ENCODE measurements at regions of chr7 and their contacts with region 1.

Region 1: GRCh38 chr7:69932034-69932628 is 333.9 kb downstream of the AUTS2 start:
- DNase-seq: no peak
- ATAC-seq: peak in 3 of 4 donors; percentile 48 to 62 (median 53)
- H3K4me3 ChIP-seq: no peak overlapping the region
- H3K27ac ChIP-seq: no peak overlapping the region
- H3K4me1 ChIP-seq: peaks cover 0 to 16% (median 0%) of the 10 kb centered on the region in 12 donors
- H3K27me3 ChIP-seq: no peaks in the 10 kb centered on the region
- CTCF ChIP-seq: peak; percentile 48 to 76 (median 69)
- POLR2A ChIP-seq: no peak

Region 2: GRCh38 chr7:68063166-68063565 is 1869.0 kb before region 1 on chr7:
- intact Hi-C with region 1: loop called in 1 of 10 experiments (anchors 10 kb)
- DNase-seq: peak in 1 of 5 donors; percentile 6
- ATAC-seq: no peak
- H3K4me3 ChIP-seq: no peak overlapping the region
- H3K27ac ChIP-seq: no peak overlapping the region
- H3K4me1 ChIP-seq: no peaks in the 10 kb centered on the region
- H3K27me3 ChIP-seq: peaks cover 0 to 26% (median 0%) of the 10 kb centered on the region in 9 donors
- CTCF ChIP-seq: peak; percentile 11 to 49 (median 34)
- POLR2A ChIP-seq: no peak

Region 3: DNA sequence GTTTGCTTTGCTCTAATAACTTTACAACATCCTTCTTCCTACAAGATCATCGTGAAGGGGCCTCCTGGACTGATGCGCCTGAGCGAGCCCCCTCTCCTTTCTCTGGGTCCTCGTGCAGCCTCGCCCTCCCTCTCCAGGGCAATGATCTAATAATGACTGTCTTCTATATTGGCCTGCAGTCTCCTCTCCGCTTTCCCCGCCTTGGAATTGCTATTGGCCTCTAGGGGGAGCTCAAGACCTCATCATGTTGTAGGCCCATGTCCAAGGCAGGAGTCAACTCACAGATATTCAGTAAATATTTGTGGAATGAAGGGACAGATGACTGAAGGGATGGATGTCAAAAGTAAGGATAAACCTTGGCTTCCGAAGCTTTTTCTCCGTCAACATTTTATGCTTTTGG is 1755.2 kb before region 1 on chr7:
- intact Hi-C with region 1: loop called in 1 of 10 experiments (anchors 10 kb)
- DNase-seq: peak in 3 of 5 donors; percentile 28 to 39 (median 33)
- ATAC-seq: peak in 3 of 4 donors; percentile 61 to 72 (median 70)
- H3K4me3 ChIP-seq: no peak overlapping the region
- H3K27ac ChIP-seq: no peak overlapping the region
- H3K4me1 ChIP-seq: no peaks in the 10 kb centered on the region
- H3K27me3 ChIP-seq: peaks cover 0 to 5% (median 0%) of the 10 kb centered on the region in 9 donors
- CTCF ChIP-seq: peak; percentile 53 to 80 (median 70)
- POLR2A ChIP-seq: no peak

Region 4: DNA sequence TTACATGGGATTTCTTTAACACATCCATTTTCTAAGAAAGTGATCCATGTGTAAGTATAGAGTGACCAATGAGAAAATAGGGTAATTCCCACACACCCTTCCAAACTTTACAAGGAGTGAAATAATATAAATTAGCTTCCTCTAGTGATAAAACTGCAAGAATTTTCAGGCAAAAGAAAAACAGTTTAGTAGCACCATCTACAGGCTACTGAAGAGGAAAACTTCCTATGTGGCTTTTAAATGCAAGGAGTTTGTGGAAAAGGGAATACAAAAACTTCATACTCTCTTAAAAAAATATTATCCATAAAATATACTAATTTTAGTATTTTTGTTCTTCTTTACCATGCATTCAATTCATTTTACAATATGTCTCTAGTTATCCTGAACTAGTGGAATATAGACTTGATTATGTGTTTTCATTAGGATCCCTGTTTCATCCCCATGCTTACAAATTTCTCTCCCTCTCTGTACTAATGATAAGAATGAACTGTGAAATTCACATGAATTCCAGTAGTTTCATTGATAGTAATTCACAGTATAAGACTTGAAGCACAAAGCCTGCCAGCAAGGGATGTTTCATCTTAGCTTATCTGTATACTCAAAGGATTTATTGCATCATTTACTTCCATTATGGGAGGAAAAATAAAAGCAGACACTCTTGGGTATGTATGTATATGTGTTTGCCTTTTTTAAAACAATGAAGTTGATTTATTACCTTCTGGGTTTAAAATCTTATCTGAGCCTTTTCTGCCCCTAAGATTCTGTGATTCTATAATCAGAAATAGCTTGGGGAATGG is 109.0 kb after region 1 on chr7:
- intact Hi-C with region 1: loop called in 2 of 10 experiments (anchors 5 kb)
- DNase-seq: no peak
- ATAC-seq: peak in 1 of 4 donors; percentile 42
- H3K4me3 ChIP-seq: no peak overlapping the region
- H3K27ac ChIP-seq: no peak overlapping the region
- H3K4me1 ChIP-seq: peaks cover 0 to 15% (median 6%) of the 10 kb centered on the region in 12 donors
- H3K27me3 ChIP-seq: no peaks in the 10 kb centered on the region
- CTCF ChIP-seq: peak in 11 of 12 donors; percentile 29 to 69 (median 60)
- POLR2A ChIP-seq: no peak

Region 5: GRCh38 chr7:70165477-70166170 is 233.5 kb after region 1 on chr7:
- intact Hi-C with region 1: loop called in 1 of 10 experiments (anchors 10 kb)
- DNase-seq: no peak
- ATAC-seq: no peak
- H3K4me3 ChIP-seq: no peak overlapping the region
- H3K27ac ChIP-seq: no peak overlapping the region
- H3K4me1 ChIP-seq: no peaks in the 10 kb centered on the region
- H3K27me3 ChIP-seq: no peaks in the 10 kb centered on the region
- CTCF ChIP-seq: no peak
- POLR2A ChIP-seq: no peak

Measured in heart left ventricle (tissue), 16 donors.